ENCODE measurements at regions of chr12 and their contacts with region 1.

Region 1: GRCh38 chr12:109713187-109713984 is at the start of gene FAM222A:
- DNase-seq: peak; percentile 94 to 99 (median 98)
- ATAC-seq: peak; percentile 93
- H3K4me3 ChIP-seq: peak within 1 kb of the TSS; percentile 56
- H3K4me3 Mint-ChIP-seq: peak within 1 kb of the TSS; percentile 84
- H3K27ac ChIP-seq: no peak within 1 kb of the TSS
- H3K27ac Mint-ChIP-seq: peak within 1 kb of the TSS; percentile 30
- H3K4me1 ChIP-seq: peaks cover 9% of the 10 kb centered on the region
- H3K4me1 Mint-ChIP-seq: peaks cover 5% of the 10 kb centered on the region
- H3K27me3 ChIP-seq: peaks cover 13 to 39% of the 10 kb centered on the region in 2 experiments
- H3K27me3 Mint-ChIP-seq: peaks cover 71% of the 10 kb centered on the region
- CTCF ChIP-seq: no peak
- total RNA-seq, gene FAM222A: 1.1 to 1.7 TPM

Region 2: DNA sequence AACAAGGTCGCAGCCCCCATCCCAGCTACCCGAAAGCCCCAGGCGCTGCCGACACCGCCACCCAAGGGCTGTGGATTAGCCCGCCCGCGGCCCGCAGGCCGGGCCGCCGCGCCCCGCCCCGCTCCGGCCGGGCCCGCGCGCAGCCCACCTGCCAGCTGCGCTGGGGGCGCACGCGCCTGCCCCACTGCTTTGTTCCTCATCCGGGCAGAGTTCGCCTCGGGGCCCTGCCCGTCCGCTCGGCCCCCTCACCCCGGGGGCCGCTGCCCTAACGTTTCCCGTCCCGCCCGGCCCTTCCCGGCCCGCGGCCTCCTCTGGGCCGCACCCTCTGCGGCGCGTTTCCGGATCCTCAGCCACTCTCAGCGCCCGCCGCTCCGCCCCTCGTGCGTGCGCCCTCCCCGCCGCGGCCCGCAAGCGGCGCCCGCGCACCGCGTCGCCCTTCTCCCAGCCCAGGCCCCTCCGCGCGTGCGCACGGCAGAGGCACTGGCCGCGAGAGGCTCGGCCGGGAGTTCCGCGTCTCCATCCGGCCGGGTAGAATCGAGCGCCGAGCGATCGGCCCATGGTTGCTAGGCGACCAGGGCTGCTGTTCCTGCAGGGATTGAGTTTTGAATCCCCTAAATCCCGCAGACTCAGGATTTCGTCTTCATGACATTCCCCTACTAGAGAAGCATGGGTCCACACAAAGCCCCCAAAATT is 1952.4 kb before region 1 on chr12 and contains the start of gene PRDM4:
- CTCF ChIA-PET with region 1: no interaction called
- POLR2A ChIA-PET with region 1: no interaction called
- intact Hi-C with region 1: loop called in 1 of 2 experiments (anchors 5 kb)
- DNase-seq: peak; percentile 75 to 98 (median 88)
- ATAC-seq: peak; percentile 91
- H3K4me3 ChIP-seq: peak within 1 kb of the TSS; percentile 78
- H3K4me3 Mint-ChIP-seq: peak within 1 kb of the TSS; percentile 96
- H3K27ac ChIP-seq: peak within 1 kb of the TSS; percentile 51 to 77
- H3K27ac Mint-ChIP-seq: peak within 1 kb of the TSS; percentile 87
- H3K4me1 ChIP-seq: peaks cover 26% of the 10 kb centered on the region
- H3K4me1 Mint-ChIP-seq: peaks cover 48% of the 10 kb centered on the region
- H3K27me3 ChIP-seq: no peaks in the 10 kb centered on the region
- H3K27me3 Mint-ChIP-seq: no peaks in the 10 kb centered on the region
- CTCF ChIP-seq: no peak
- total RNA-seq, gene PRDM4: 40.2 to 44.0 TPM

Region 3: GRCh38 chr12:109093022-109093918 is 620.1 kb before region 1 on chr12 and contains the start of gene ALKBH2:
- CTCF ChIA-PET with region 1: no interaction called
- POLR2A ChIA-PET with region 1: no interaction called
- intact Hi-C with region 1: loop called in 1 of 2 experiments (anchors 5 kb)
- DNase-seq: peak; percentile 91 to 98 (median 94)
- ATAC-seq: peak; percentile 83
- H3K4me3 ChIP-seq: peak within 1 kb of the TSS; percentile 84
- H3K4me3 Mint-ChIP-seq: peak within 1 kb of the TSS; percentile 91
- H3K27ac ChIP-seq: peak within 1 kb of the TSS; percentile 64 to 66
- H3K27ac Mint-ChIP-seq: peak within 1 kb of the TSS; percentile 87
- H3K4me1 ChIP-seq: peaks cover 41% of the 10 kb centered on the region
- H3K4me1 Mint-ChIP-seq: peaks cover 43% of the 10 kb centered on the region
- H3K27me3 ChIP-seq: no peaks in the 10 kb centered on the region
- H3K27me3 Mint-ChIP-seq: no peaks in the 10 kb centered on the region
- CTCF ChIP-seq: peak; percentile 96
- total RNA-seq, gene ALKBH2: 12.8 to 14.0 TPM

Region 4: DNA sequence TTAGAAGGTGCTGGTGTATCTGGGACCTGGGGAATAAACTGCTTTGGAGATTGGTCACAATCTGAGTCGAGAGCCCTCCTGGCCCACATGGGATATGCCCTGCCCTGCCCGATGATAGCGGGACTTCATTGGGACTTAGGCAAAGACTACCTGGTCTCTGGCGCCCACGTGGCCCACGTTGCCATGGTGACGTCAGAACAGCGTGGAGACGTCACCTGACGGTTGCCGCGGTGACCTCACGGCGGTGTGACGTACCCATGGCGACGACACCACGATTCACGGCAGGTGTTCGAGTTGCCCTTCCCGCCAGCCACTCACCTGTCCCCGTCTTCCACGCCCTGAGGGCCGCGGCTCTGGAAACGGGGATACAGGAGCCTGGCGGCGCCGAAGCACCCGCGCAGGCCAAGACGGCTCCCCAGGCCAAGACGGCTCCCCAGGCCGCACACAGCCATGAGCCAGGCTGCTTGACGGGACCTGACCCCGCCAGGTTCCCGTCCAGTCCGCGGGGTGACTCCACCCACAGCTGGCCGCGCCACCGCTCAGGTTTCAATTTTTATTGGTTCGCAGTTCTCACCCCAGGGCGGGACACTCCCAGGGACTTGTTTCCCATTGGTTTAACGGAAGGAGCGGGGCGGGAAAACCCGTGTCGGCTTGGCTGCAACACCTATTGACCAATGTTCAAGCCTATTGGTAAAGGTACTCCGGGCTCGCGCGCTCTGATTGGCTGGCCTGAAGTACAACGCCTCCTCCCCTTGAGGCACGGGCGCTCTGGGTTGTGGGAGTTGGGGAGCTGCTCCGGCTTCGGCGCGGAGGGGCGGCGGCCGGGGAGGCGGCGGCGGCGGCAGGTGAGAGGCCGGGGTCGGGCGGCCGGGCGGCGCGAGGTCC is 140.1 kb before region 1 on chr12 and contains the starts of genes MMAB and MVK:
- CTCF ChIA-PET with region 1: no interaction called
- POLR2A ChIA-PET with region 1: interaction called, 10 read pairs
- intact Hi-C with region 1: loop called (anchors 1 to 2 kb)
- DNase-seq: peak; percentile 95 to 100 (median 98)
- ATAC-seq: peak; percentile 91
- H3K4me3 ChIP-seq: peak within 1 kb of the TSS; percentile 78
- H3K4me3 Mint-ChIP-seq: peak within 1 kb of the TSS; percentile 99
- H3K27ac ChIP-seq: peak within 1 kb of the TSS; percentile 83 to 96
- H3K27ac Mint-ChIP-seq: peak within 1 kb of the TSS; percentile 95
- H3K4me1 ChIP-seq: peaks cover 19% of the 10 kb centered on the region
- H3K4me1 Mint-ChIP-seq: peaks cover 29% of the 10 kb centered on the region
- H3K27me3 ChIP-seq: no peaks in the 10 kb centered on the region
- H3K27me3 Mint-ChIP-seq: no peaks in the 10 kb centered on the region
- CTCF ChIP-seq: no peak
- total RNA-seq, gene MMAB: 8.6 to 9.2 TPM
- total RNA-seq, gene MVK: 8.2 to 8.4 TPM

Region 5: GRCh38 chr12:109685574-109686447 is 27.6 kb before region 1 on chr12:
- CTCF ChIA-PET with region 1: no interaction called
- POLR2A ChIA-PET with region 1: no interaction called
- intact Hi-C with region 1: no loop called
- DNase-seq: no peak
- ATAC-seq: no peak
- H3K4me3 ChIP-seq: no peak overlapping the region
- H3K4me3 Mint-ChIP-seq: no peak overlapping the region
- H3K27ac ChIP-seq: no peak overlapping the region
- H3K27ac Mint-ChIP-seq: no peak overlapping the region
- H3K4me1 ChIP-seq: no peaks in the 10 kb centered on the region
- H3K4me1 Mint-ChIP-seq: no peaks in the 10 kb centered on the region
- H3K27me3 ChIP-seq: no peaks in the 10 kb centered on the region
- H3K27me3 Mint-ChIP-seq: peaks cover 9% of the 10 kb centered on the region
- CTCF ChIP-seq: no peak

Region 6: DNA sequence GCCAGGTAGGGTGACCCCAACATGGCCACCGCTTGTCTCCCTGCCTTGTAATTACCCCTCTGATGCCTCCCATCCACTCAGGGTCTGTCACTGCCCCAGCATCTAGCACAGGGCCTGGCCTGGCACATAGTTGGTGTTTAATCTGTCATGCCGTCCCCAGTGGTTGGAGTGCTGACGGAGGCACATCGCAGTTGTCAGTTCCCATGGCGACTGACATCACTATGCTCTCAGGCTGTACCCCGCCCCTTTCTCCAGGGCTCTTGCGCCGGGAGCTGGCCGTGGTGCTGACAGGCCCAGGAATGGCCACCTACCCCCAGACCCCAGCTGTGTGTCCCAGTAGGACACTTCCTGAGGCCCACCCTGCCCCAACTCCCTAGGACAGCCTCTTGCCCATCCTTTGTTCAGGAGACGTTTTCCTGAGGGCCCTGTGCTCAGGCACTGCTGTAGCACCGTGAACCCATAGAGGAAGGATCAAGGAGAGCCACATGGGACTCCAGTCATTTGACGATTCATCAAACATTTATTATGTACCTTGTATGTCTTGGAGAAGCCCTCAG is 23.2 kb after region 1 on chr12:
- CTCF ChIA-PET with region 1: no interaction called
- POLR2A ChIA-PET with region 1: no interaction called
- intact Hi-C with region 1: no loop called
- DNase-seq: peak in 6 of 14 experiments; percentile 0 to 56 (median 20)
- ATAC-seq: peak; percentile 37
- H3K4me3 ChIP-seq: no peak overlapping the region
- H3K4me3 Mint-ChIP-seq: no peak overlapping the region
- H3K27ac ChIP-seq: no peak overlapping the region
- H3K27ac Mint-ChIP-seq: no peak overlapping the region
- H3K4me1 ChIP-seq: no peaks in the 10 kb centered on the region
- H3K4me1 Mint-ChIP-seq: no peaks in the 10 kb centered on the region
- H3K27me3 ChIP-seq: peaks cover 8 to 22% of the 10 kb centered on the region in 2 experiments
- H3K27me3 Mint-ChIP-seq: peaks cover 35% of the 10 kb centered on the region
- CTCF ChIP-seq: no peak

Region 7: DNA sequence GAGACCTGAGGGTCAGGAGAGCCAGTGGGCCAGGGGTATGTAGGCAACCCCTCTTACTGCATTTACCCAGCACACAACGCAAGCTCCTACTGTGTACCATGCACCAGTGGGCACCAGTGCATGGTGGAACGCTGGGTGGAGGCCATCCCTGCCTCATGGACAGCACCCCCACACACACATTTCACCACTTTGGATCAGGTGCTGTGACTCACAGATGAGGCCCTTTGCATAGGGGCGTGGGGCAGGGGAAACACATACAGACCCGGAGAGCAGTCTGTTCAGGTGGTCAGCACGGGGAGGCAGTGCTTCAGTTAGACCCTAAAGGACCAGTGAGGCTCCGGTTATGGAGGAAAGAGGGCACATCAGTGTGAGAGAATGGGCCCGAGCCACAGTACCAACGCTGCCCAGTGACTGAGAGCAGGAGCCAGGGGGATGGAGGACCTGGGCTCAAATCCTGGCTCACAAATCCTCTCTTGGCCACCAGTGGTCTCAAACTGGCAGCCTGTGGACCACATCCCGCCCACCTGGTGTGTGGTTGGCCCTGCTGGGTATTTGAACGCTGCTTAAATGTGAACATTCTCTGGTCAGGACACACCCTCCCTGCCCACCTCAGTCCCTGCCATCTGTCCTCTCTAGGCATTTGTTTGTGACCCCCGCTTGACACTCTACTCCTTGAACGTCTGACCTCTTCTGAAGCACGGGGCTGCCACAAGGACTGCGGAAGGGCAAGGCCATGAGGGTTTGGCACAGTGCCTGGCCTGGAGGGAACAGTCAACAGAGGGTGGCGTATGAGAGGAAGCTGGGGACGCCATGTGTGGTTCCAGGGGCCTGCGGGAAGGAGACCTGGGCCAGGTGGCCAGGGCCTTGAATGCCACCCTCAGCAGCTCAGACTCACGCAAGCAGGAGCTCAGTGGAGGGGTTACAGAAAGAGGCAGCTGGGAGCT is 46.9 kb after region 1 on chr12:
- CTCF ChIA-PET with region 1: no interaction called
- POLR2A ChIA-PET with region 1: no interaction called
- intact Hi-C with region 1: no loop called
- DNase-seq: peak in 2 of 14 experiments; percentile 0 to 27
- ATAC-seq: no peak
- H3K4me3 ChIP-seq: no peak overlapping the region
- H3K4me3 Mint-ChIP-seq: no peak overlapping the region
- H3K27ac ChIP-seq: no peak overlapping the region
- H3K27ac Mint-ChIP-seq: no peak overlapping the region
- H3K4me1 ChIP-seq: no peaks in the 10 kb centered on the region
- H3K4me1 Mint-ChIP-seq: no peaks in the 10 kb centered on the region
- H3K27me3 ChIP-seq: no peaks in the 10 kb centered on the region
- H3K27me3 Mint-ChIP-seq: peaks cover 7% of the 10 kb centered on the region
- CTCF ChIP-seq: no peak

Region 8: DNA sequence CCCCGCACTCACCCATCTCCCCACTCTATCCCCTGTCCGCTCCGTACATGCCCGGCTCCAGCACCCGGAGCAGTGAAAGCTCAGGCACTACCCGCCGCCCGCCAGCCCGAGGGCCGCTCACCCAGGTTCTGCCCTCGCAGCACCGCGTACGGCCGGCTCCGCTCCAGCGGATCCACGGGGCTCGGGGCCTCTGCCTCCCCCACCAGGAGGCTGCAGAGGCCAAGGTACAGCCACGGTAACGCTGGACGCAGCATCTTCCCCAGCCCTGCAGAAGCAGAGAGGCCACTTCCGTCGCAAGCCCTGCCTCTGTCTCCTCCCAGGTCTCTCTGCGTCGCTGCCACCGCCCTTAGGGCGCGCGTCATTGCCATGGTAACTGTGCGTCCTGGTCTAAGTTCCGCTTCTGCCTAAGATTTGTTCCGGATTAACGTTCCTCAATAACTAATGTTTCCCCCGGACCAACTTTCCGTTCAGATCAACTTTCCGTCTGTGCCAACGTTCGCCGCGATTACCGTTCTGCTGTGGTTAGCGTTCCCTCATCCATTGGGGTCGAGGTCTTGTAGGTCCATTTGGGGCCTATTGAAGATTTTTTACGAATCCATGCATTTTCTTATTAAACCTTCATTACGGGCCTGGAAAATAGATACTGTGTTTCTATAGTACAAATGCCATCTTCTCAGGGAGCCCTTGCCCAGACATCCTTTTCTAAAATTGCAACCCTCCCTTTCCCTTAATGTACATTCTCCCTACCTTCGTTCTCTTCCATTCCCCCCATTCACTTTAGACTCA is 335.0 kb after region 1 on chr12 and contains the start of gene C12orf76:
- CTCF ChIA-PET with region 1: no interaction called
- POLR2A ChIA-PET with region 1: no interaction called
- intact Hi-C with region 1: loop called in 1 of 2 experiments (anchors 5 kb)
- DNase-seq: peak; percentile 82 to 97 (median 90)
- ATAC-seq: peak; percentile 99
- H3K4me3 ChIP-seq: peak within 1 kb of the TSS; percentile 79
- H3K4me3 Mint-ChIP-seq: peak within 1 kb of the TSS; percentile 93
- H3K27ac ChIP-seq: peak within 1 kb of the TSS; percentile 76 to 87
- H3K27ac Mint-ChIP-seq: peak within 1 kb of the TSS; percentile 82
- H3K4me1 ChIP-seq: peaks cover 29% of the 10 kb centered on the region
- H3K4me1 Mint-ChIP-seq: peaks cover 29% of the 10 kb centered on the region
- H3K27me3 ChIP-seq: no peaks in the 10 kb centered on the region
- H3K27me3 Mint-ChIP-seq: no peaks in the 10 kb centered on the region
- CTCF ChIP-seq: no peak
- total RNA-seq, gene C12orf76: 9.8 to 12.6 TPM

Region 9: GRCh38 chr12:110403146-110403975 is 690.0 kb after region 1 on chr12 and contains the start of gene ANAPC7:
- CTCF ChIA-PET with region 1: no interaction called
- POLR2A ChIA-PET with region 1: no interaction called
- intact Hi-C with region 1: loop called in 1 of 2 experiments (anchors 10 kb)
- DNase-seq: peak; percentile 73 to 94 (median 84)
- ATAC-seq: peak; percentile 94
- H3K4me3 ChIP-seq: peak within 1 kb of the TSS; percentile 79
- H3K4me3 Mint-ChIP-seq: peak within 1 kb of the TSS; percentile 99
- H3K27ac ChIP-seq: peak within 1 kb of the TSS; percentile 86 to 91
- H3K27ac Mint-ChIP-seq: peak within 1 kb of the TSS; percentile 98
- H3K4me1 ChIP-seq: peaks cover 26% of the 10 kb centered on the region
- H3K4me1 Mint-ChIP-seq: peaks cover 41% of the 10 kb centered on the region
- H3K27me3 ChIP-seq: no peaks in the 10 kb centered on the region
- H3K27me3 Mint-ChIP-seq: no peaks in the 10 kb centered on the region
- CTCF ChIP-seq: no peak
- total RNA-seq, gene ANAPC7: 16.4 to 18.2 TPM